Psoas muscle (tissue), 8 donors: ENCODE measurements at regions of chr7 and their contacts with region 1.

Region 1: DNA sequence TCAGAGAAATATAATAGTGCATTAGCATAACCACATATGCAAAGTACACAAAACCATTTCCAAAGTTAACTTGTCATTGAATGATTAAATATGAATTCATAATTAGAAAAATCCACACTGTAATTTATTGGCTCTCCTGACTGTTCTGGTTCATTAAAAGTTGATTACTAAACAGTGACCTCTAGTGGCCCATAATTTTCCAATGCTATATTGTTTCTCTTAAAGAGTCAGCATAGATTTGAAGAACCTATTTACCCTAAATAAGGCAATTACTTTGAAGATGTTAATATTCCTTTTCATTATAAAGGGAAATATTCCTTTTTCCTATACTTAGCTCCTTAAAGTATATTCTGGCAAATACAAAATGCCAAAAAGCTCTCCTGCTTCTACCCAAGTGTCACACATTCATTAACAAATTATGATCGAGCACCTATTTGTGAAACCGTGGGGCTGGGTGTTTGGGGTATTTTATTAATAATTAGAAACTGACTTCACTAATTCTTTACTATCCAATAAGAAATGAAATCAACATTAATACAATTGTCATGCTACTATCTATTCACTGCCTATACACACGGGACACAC is 86.2 kb downstream of the HIBADH start:
- DNase-seq: no peak
- ATAC-seq: peak in 3 of 4 donors; percentile 40 to 80 (median 42)
- H3K4me3 ChIP-seq: no peak overlapping the region
- H3K27ac ChIP-seq: no peak overlapping the region
- H3K4me1 ChIP-seq: no peaks in the 10 kb centered on the region
- H3K27me3 ChIP-seq: no peaks in the 10 kb centered on the region
- CTCF ChIP-seq: peak; percentile 75

Region 2: GRCh38 chr7:27210441-27211083 is 365.9 kb before region 1 on chr7:
- intact Hi-C with region 1: loop called in 1 of 2 experiments (anchors 5 kb)
- DNase-seq: no peak
- ATAC-seq: peak; percentile 55 to 84 (median 62)
- H3K4me3 ChIP-seq: peak overlapping the region; percentile 48
- H3K27ac ChIP-seq: no peak overlapping the region
- H3K4me1 ChIP-seq: peaks cover 5% of the 10 kb centered on the region
- H3K27me3 ChIP-seq: peaks cover 0 to 77% (median 25%) of the 10 kb centered on the region in 3 donors
- CTCF ChIP-seq: peak; percentile 75

Region 3: DNA sequence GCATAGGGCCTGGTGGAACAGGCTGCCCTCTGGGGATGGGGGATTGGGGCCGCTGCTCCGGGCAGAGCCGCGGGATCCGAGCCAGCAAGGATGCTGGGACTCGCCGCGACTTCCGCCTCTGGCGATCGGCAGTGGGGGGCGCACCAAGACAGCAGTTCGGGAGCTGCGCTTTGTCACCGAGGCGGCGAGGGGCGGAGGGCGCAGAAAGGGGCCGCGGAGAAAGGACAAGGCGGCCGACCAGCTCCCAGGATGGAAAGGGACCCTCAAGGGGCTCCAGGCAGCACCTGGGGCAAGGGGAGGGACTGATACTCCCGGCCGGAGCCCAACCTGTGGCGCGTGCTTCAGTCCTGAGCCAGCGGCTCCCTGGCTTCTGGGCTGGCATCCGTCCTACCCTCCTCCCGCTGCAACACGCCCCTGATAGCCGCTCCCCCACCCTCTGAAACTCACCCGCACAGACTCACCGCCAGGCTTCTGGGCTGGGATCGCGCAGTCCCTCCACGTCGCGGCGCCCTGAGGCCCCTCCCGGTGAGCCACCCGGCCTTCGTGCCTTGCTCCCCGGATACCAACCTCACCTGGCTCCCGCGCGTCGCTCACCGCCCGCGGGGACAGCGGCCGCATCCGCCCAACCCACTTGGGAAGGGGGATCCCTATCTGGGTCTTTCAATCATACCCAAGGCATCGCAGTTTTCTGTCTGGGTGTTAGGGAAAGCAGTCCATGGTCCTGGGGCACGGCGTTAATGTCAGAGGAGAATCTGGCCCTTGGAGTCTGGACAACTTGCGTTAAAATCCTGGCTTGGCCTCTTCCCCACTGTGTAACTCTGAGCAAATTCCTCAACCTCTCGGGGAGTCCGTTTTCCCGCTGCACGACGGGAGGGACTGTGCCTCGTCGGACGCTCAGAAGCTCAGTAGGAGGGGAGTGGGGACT is 340.8 kb before region 1 on chr7:
- intact Hi-C with region 1: loop called in 1 of 2 experiments (anchors 10 kb)
- DNase-seq: peak in 1 of 2 donors; percentile 79
- ATAC-seq: peak in 3 of 4 donors; percentile 57 to 76 (median 64)
- H3K4me3 ChIP-seq: peak overlapping the region; percentile 62
- H3K27ac ChIP-seq: no peak overlapping the region
- H3K4me1 ChIP-seq: peaks cover 11% of the 10 kb centered on the region
- H3K27me3 ChIP-seq: peaks cover 4 to 65% (median 24%) of the 10 kb centered on the region in 3 donors
- CTCF ChIP-seq: peak; percentile 33